ENCODE measurements at regions of chr22 and their contacts with region 1.

Region 1: GRCh38 chr22:50474668-50475492 is at the start of gene SBF1:
- DNase-seq: peak; percentile 87
- H3K4me3 Mint-ChIP-seq: peak within 1 kb of the TSS; percentile 87
- H3K27ac Mint-ChIP-seq: peak within 1 kb of the TSS; percentile 74
- H3K4me1 Mint-ChIP-seq: peaks cover 39% of the 10 kb centered on the region
- H3K27me3 Mint-ChIP-seq: peaks cover 12% of the 10 kb centered on the region
- total RNA-seq, gene SBF1: 113 and 116 TPM in 2 replicates

Region 2: DNA sequence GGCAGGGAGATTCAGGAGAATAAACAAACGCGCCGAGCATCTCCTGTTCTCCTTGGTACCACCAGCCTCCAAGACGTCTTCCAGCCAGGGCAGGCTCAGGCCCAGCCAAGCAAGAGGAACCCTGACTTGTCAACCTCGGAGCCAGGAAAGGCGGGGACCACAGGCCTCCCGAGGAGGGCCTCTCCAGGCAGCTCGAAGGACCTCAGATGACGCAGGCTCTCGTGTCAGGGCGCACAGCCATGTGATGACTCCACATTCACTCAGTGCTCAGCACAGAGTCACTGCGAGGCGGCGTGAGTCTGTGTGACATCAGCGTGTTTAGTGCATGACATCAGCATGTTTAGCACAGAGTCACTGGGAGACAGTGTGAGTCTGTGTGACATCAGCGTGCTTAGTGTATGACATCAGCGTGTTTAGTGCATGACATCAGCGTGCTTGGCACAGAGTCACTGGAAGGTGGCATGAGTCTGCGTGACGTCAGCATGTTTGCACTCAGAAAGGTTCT is 888.6 kb before region 1 on chr22:
- intact Hi-C with region 1: no loop called
- DNase-seq: no peak
- H3K4me3 Mint-ChIP-seq: no peak overlapping the region
- H3K27ac Mint-ChIP-seq: no peak overlapping the region
- H3K4me1 Mint-ChIP-seq: no peaks in the 10 kb centered on the region
- H3K27me3 Mint-ChIP-seq: no peaks in the 10 kb centered on the region

Region 3: GRCh38 chr22:50314455-50315288 is 160.2 kb before region 1 on chr22:
- intact Hi-C with region 1: loop called (anchors 1 kb)
- DNase-seq: peak; percentile 69
- H3K4me3 Mint-ChIP-seq: peak overlapping the region; percentile 75
- H3K27ac Mint-ChIP-seq: peak overlapping the region; percentile 86
- H3K4me1 Mint-ChIP-seq: peaks cover 8% of the 10 kb centered on the region
- H3K27me3 Mint-ChIP-seq: peaks cover 2% of the 10 kb centered on the region

Region 4: GRCh38 chr22:50525390-50526068 is 50.6 kb after region 1 on chr22 and contains the start of gene SCO2:
- intact Hi-C with region 1: loop called (anchors 1 kb)
- DNase-seq: peak; percentile 97
- H3K4me3 Mint-ChIP-seq: peak within 1 kb of the TSS; percentile 94
- H3K27ac Mint-ChIP-seq: peak within 1 kb of the TSS; percentile 88
- H3K4me1 Mint-ChIP-seq: peaks cover 34% of the 10 kb centered on the region
- H3K27me3 Mint-ChIP-seq: no peaks in the 10 kb centered on the region
- total RNA-seq, gene SCO2: 8.7 and 14.8 TPM in 2 replicates

Region 5: GRCh38 chr22:50576070-50576469 is 101.2 kb after region 1 on chr22:
- intact Hi-C with region 1: no loop called
- DNase-seq: no peak
- H3K4me3 Mint-ChIP-seq: no peak overlapping the region
- H3K27ac Mint-ChIP-seq: no peak overlapping the region
- H3K4me1 Mint-ChIP-seq: peaks cover 8% of the 10 kb centered on the region
- H3K27me3 Mint-ChIP-seq: no peaks in the 10 kb centered on the region

Region 6: DNA sequence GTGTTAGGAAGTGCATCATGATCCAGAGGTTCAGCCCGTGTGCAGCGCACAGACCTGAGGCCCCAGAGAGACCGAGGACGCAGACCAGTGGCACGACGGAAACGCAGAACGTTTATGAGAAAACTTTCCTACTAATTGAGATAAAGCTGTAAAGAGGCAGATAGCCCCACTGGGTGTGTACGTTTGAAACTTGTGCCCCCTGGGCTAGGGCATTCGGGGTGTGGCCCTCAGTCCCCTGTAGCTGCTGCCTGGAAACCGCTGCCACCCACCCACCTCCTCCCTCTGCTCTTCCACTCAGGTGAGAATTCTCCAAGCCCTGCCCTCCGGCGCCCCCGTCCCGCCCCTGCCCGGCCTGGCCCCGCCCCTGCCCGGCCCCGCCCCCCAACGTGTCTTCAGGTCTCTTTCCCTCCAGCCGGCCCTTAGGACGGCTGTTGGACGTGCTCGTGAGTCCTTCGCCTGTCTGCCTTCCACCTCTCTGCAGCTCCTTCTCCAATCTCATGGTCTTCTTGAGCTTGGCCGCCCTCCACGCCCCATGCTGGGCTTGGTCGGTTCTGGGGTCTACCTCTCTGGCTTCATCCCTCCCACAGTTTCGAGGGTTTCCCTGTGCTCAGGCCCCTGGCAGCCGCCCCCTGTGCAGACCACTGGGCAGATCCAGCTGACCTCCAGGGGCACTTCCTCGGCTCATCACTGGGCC is 137.8 kb after region 1 on chr22:
- intact Hi-C with region 1: no loop called
- DNase-seq: no peak
- H3K4me3 Mint-ChIP-seq: no peak overlapping the region
- H3K27ac Mint-ChIP-seq: no peak overlapping the region
- H3K4me1 Mint-ChIP-seq: no peaks in the 10 kb centered on the region
- H3K27me3 Mint-ChIP-seq: peaks cover 8% of the 10 kb centered on the region

Region 7: DNA sequence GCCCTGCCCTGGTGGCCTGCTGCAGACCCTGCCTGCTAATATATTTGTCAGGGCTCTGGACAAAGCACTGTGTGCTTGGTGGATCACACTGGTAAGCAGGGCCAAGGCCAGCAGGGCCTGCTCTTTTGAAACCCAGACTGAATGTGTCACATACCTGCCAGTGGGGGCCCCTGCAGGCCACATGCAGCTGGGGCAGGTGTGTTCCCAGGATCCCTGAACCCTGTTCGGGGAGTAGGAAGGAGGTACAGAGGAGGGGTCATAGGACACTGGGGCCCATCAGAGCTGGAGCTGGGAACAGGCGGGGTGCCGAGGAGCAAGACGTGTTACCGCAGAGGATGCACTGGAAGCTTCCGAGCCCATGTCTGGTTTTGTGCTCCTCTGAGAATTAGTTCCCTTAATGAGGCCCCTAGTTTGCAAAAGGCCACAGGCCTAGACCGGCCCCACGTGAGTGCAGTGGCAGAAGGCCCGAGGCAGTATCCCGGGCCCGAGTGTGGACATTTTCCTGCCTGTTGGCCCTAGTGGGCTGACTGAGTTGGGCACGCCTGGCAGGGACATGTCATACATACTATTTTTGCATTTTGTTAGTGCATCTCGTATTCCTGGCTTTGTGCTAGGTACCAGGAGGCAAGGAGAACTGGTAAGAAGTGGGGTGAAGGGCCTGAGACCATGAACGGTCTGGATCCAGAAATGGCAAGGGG is 251.9 kb after region 1 on chr22:
- intact Hi-C with region 1: no loop called
- DNase-seq: no peak
- H3K4me3 Mint-ChIP-seq: no peak overlapping the region
- H3K27ac Mint-ChIP-seq: no peak overlapping the region
- H3K4me1 Mint-ChIP-seq: no peaks in the 10 kb centered on the region
- H3K27me3 Mint-ChIP-seq: no peaks in the 10 kb centered on the region